ENCODE measurements at regions of chr14 and their contacts with region 1.

Region 1: GRCh38 chr14:90383075-90383730 is 13.6 kb upstream of the CALM1 start:
- DNase-seq: peak; percentile 100
- ATAC-seq: peak; percentile 85 to 92 (median 90)
- H3K4me3 ChIP-seq: peak overlapping the region; percentile 76
- H3K27ac ChIP-seq: peak overlapping the region; percentile 100
- H3K4me1 ChIP-seq: peaks cover 30% of the 10 kb centered on the region
- H3K27me3 ChIP-seq: no peaks in the 10 kb centered on the region
- CTCF ChIP-seq: no peak

Region 2: DNA sequence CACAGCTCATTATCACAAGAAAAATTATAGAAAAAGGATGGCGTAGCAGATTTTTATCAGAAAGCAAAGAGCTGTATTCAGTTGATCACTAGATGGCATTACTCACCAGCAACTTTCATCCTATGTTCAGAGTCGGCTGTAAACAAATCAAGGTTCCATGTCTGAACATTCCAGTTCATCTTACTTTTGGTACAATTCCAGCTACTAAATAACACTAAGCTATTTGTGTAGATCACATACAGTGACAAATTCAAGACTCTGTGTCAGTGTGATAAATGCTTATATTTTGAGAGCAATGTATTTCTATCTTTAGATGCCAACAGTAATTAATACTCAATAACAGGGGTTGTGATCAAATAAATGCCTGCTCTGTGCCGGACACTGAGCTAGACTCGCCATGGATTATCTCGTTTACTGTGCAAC is 81.5 kb before region 1 on chr14:
- intact Hi-C with region 1: loop called in 1 of 2 experiments (anchors 5 kb)
- DNase-seq: no peak
- ATAC-seq: peak; percentile 43 to 73 (median 64)
- H3K4me3 ChIP-seq: no peak overlapping the region
- H3K27ac ChIP-seq: peak overlapping the region; percentile 74
- H3K4me1 ChIP-seq: peaks cover 34% of the 10 kb centered on the region
- H3K27me3 ChIP-seq: no peaks in the 10 kb centered on the region
- CTCF ChIP-seq: peak; percentile 66

Region 3: DNA sequence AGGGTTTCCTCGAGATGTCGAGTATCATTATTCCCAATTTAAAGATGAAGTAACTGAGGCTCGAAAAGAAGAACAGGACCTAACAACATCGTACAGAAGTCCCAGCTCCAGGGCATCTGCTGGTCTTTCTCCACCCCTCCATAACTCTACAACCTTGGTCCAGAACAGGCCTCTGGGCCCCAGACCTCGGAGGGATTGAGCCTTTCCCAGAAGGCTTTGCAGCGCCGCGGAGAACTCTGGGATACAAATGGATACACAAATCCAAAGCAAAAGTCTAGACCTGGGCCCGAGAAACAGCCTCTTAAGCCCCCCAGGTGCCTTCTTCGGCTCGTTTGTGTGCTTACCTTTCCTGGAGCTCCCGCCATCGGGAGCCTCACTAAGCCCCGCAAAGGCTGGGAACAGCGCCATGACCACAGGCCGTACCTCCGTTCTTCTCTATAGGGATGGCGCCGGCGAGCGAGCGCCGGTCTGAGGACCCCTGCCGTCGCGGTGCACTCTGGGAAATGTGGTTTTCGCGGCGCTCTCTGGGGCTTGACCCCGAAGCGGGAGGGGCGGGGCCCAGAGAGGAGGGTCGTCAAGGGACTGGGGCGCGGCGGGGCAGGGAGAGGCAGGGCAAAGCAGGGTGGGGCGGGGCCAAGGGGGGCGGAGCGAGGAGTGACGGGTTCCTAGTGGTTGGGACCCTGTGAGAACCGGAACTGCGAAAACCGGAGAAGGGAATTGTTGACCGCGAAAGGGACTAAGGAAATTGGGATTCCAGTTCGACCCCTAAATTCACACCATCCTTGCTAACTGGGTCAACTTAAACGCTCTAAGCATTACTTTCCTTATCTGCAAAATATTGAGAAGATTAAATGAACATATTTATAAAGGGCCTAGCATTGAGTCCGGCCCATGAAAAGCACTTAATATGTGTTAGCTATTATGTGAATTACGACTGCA is 51.4 kb before region 1 on chr14 and contains the start of gene NRDE2:
- intact Hi-C with region 1: loop called (anchors 5 kb)
- DNase-seq: peak; percentile 100
- ATAC-seq: peak; percentile 98 to 100 (median 100)
- H3K4me3 ChIP-seq: peak within 1 kb of the TSS; percentile 76
- H3K27ac ChIP-seq: peak within 1 kb of the TSS; percentile 88
- H3K4me1 ChIP-seq: peaks cover 12% of the 10 kb centered on the region
- H3K27me3 ChIP-seq: peaks cover 0 to 15% (median 0%) of the 10 kb centered on the region in 3 donors
- CTCF ChIP-seq: no peak
- total RNA-seq, gene NRDE2: 11.0 to 21.8 (median 12.8) TPM